ENCODE measurements at regions of chr14 and their contacts with region 1.

Region 1: DNA sequence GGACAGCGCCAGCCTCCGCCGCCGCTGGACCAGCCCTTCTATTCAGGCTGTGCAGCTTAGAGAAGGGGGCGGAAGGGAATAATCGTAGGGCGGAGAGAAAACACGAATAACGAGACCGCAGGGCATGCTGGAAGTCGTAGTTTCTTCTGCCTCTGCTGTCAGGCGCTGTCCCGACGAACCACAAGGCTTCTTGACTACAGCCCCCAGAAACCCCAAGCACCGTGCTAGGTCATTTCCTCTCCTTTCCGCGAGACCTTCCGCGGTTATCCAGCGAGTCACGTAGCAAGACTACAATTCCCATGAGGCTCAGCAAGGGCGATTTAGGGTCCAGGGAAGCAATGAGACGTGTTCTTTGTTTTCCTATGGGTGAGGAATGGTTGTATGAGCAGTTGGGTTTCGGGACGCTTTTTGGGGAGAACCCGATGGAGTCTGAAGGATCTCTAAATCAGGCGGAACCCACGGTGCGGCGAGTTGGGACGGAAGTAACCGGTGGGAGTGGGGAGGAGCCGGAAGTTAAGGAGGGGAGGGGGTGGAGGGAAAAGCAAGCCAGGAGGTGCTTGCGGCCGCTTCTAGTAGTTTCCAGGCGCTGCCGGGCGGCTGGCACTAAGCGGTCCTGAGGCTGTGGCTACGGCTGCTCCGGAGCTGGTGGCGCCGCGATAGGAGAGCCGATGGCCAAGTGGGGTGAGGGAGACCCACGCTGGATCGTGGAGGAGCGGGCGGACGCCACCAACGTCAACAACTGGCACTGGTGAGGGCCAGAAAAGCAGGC is at the starts of genes AHSA1 and VIPAS39:
- DNase-seq: peak; percentile 67 to 98 (median 96)
- ATAC-seq: peak; percentile 98
- H3K4me3 ChIP-seq: peak within 1 kb of the TSS; percentile 100
- H3K4me3 Mint-ChIP-seq: peak within 1 kb of the TSS; percentile 96 to 100 (median 100)
- H3K27ac ChIP-seq: peak within 1 kb of the TSS; percentile 82
- H3K27ac Mint-ChIP-seq: peak within 1 kb of the TSS; percentile 94 to 100 (median 99)
- H3K4me1 ChIP-seq: peaks cover 20 to 26% of the 10 kb centered on the region in 2 donors
- H3K4me1 Mint-ChIP-seq: peaks cover 22 to 67% (median 53%) of the 10 kb centered on the region in 7 donors
- H3K27me3 ChIP-seq: no peaks in the 10 kb centered on the region
- H3K27me3 Mint-ChIP-seq: no peaks in the 10 kb centered on the region
- total RNA-seq, gene AHSA1: 51.6 to 176 (median 103) TPM
- total RNA-seq, gene VIPAS39: 12.1 to 21.2 (median 20.5) TPM

Region 2: DNA sequence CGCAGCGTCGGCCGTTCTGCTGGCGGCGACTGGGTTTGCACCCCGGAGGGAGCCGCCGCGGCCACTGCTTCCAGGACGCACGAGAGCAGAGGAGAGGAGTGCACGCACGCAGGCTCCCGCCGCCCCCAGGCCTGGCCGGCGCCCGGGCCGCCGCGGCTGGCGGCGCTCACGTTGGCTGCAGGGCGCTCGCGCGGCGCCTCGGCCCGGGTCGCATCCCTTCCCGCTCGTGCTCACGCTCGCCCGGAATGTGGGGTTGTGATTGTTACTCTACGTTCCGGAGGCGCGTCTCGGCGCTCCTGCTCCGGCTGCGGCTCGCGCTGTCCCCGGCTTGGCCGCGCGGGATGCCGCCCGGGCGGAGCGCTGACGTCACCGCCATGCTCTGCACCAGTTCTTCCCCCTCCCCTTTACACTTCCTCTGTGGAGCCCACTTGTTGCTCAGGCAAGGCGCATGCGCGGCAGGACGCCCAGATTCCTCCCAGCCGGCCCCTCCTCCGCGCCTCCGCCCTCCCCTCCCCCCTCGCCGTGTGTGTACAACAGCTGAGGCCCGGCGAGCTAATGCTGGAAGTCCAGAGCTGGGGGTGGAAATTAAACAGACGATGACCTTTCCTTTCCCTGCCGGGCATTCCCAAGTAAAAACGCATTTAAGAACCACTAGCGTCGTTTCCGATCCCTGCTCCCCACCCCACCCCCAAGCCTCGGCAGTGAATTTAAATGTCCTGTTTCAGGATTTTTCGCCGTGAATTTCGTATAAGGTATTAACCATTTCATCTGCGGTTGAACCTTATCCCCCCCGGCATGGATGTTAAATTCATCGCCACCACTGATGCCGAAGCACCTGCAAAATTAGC is 429.1 kb before region 1 on chr14 and contains the start of gene IRF2BPL:
- CTCF ChIA-PET with region 1: no interaction called
- POLR2A ChIA-PET with region 1: no interaction called
- intact Hi-C with region 1: loop called in 1 of 2 experiments (anchors 1 kb)
- DNase-seq: peak; percentile 90 to 96 (median 94)
- ATAC-seq: peak; percentile 82
- H3K4me3 ChIP-seq: peak within 1 kb of the TSS; percentile 81
- H3K4me3 Mint-ChIP-seq: peak within 1 kb of the TSS; percentile 93 to 99 (median 98)
- H3K27ac ChIP-seq: peak within 1 kb of the TSS; percentile 98
- H3K27ac Mint-ChIP-seq: peak within 1 kb of the TSS; percentile 97 to 100 (median 99)
- H3K4me1 ChIP-seq: peaks cover 43 to 57% of the 10 kb centered on the region in 2 donors
- H3K4me1 Mint-ChIP-seq: peaks cover 33 to 65% (median 58%) of the 10 kb centered on the region in 7 donors
- H3K27me3 ChIP-seq: no peaks in the 10 kb centered on the region
- H3K27me3 Mint-ChIP-seq: no peaks in the 10 kb centered on the region
- total RNA-seq, gene IRF2BPL: 30.2 to 45.2 (median 34.6) TPM

Region 3: DNA sequence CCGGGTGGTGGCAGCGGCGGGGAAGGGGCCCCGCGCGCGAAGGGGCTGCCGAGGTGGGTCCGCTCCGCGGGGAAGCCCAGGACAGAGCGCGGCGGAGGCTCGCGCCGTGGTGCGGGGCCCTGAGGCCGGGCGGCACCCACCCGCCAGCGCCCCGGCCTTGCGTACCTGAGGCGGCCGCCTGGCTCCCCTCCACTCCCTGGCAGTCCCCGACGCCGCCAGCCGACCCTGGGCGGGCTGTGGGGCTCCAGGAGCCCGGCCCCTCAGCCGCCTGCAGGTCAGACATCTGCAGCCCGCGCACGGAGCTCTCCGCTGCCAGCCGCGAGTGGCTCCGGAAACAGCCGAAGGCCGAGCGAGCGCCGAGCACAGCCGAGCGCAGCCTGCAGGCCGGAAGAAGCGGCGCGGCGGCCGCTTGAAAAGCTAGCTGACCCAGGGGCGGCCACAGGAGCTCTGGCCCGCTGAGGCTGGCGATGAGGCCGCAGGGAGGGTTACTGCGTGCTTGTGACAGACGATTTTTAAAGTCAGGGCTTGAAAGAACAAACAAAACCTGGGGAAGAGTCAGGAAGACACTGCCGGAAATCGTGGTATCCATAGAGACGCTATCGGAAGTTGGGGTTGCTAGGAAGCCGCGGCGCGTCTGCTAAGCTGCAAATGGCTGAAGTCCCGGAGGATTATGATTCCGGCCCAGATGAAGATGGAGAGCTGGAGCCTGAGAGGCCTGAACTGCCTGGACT is 80.8 kb before region 1 on chr14 and contains the starts of genes SAMD15 and TMED8:
- CTCF ChIA-PET with region 1: no interaction called
- POLR2A ChIA-PET with region 1: interaction called, 5 read pairs
- intact Hi-C with region 1: loop called (anchors 1 kb)
- DNase-seq: peak; percentile 77 to 88 (median 83)
- ATAC-seq: peak; percentile 96
- H3K4me3 ChIP-seq: peak within 1 kb of the TSS; percentile 99
- H3K4me3 Mint-ChIP-seq: peak within 1 kb of the TSS in 7 of 10 donors; percentile 88 to 97 (median 93)
- H3K27ac ChIP-seq: peak within 1 kb of the TSS; percentile 87
- H3K27ac Mint-ChIP-seq: peak within 1 kb of the TSS; percentile 52 to 93 (median 77)
- H3K4me1 ChIP-seq: peaks cover 14 to 18% of the 10 kb centered on the region in 2 donors
- H3K4me1 Mint-ChIP-seq: peaks cover 17 to 41% (median 39%) of the 10 kb centered on the region in 7 donors
- H3K27me3 ChIP-seq: no peaks in the 10 kb centered on the region
- H3K27me3 Mint-ChIP-seq: peaks cover 0 to 10% (median 0%) of the 10 kb centered on the region in 5 donors
- total RNA-seq, gene SAMD15: 0.27 to 0.46 (median 0.42) TPM in 3 of 5 experiments, not detected in the others
- total RNA-seq, gene TMED8: 5.5 to 18.6 (median 7.0) TPM

Region 4: DNA sequence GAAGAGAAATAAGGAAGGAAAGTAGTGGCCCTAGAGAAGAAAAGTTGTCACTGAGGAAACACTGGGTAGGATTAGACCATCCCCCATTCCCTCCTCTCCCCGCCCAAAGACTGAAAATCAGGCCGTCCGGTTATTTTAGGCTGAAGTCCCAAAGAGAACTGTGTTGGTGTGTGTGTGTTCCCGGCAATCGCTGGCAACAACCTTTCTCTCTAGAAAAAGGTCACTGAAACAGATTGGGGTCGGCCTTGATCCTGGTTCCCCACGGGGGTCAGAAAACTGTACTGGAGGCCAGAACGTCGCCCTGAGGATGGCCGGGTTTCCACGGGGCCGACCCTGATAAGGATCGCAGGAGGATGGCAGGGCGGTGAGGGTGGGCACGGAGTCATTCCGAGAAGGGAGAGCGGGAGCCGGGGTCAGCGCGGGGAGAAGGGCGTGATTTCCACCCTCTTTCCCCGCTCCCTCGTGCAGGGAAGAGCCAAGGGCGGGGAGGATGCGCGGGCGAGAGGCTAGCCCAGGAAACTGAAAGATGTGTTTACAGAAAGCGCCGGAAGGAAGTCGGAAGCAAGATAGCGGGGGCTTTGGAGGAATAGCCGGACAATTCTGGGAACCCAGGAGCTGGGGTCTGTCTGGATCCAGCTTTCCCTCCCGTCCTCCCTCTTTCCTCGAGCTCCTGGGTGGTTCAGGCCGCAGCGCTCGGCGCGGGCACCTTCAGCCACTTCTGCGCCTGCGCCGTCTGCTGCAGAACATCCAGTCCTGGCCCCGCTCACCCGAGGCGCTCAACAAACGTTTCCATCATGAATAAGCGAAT is 184.0 kb after region 1 on chr14:
- CTCF ChIA-PET with region 1: no interaction called
- POLR2A ChIA-PET with region 1: no interaction called
- intact Hi-C with region 1: loop called in 1 of 2 experiments (anchors 1 kb)
- DNase-seq: peak; percentile 33 to 68 (median 59)
- ATAC-seq: peak; percentile 80
- H3K4me3 ChIP-seq: peak overlapping the region; percentile 84
- H3K4me3 Mint-ChIP-seq: peak overlapping the region; percentile 84 to 95 (median 92)
- H3K27ac ChIP-seq: peak overlapping the region; percentile 70
- H3K27ac Mint-ChIP-seq: peak overlapping the region; percentile 90 to 97 (median 92)
- H3K4me1 ChIP-seq: peaks cover 8% of the 10 kb centered on the region in 2 donors
- H3K4me1 Mint-ChIP-seq: peaks cover 0 to 19% (median 16%) of the 10 kb centered on the region in 7 donors
- H3K27me3 ChIP-seq: no peaks in the 10 kb centered on the region
- H3K27me3 Mint-ChIP-seq: peaks cover 0 to 3% (median 0%) of the 10 kb centered on the region in 5 donors

Region 5: GRCh38 chr14:77799863-77800730 is 342.4 kb after region 1 on chr14 and contains the start of gene ADCK1:
- CTCF ChIA-PET with region 1: no interaction called
- POLR2A ChIA-PET with region 1: no interaction called
- intact Hi-C with region 1: loop called (anchors 1 kb)
- DNase-seq: peak; percentile 74 to 87 (median 84)
- ATAC-seq: peak; percentile 94
- H3K4me3 ChIP-seq: peak within 1 kb of the TSS; percentile 71
- H3K4me3 Mint-ChIP-seq: peak within 1 kb of the TSS; percentile 83 to 89 (median 87)
- H3K27ac ChIP-seq: peak within 1 kb of the TSS; percentile 81
- H3K27ac Mint-ChIP-seq: peak within 1 kb of the TSS; percentile 34 to 92 (median 78)
- H3K4me1 ChIP-seq: no peaks in the 10 kb centered on the region
- H3K4me1 Mint-ChIP-seq: peaks cover 0 to 17% (median 6%) of the 10 kb centered on the region in 7 donors
- H3K27me3 ChIP-seq: no peaks in the 10 kb centered on the region
- H3K27me3 Mint-ChIP-seq: no peaks in the 10 kb centered on the region
- total RNA-seq, gene ADCK1: 4.5 to 10.6 (median 10.3) TPM

Measured in naive thymus-derived CD4-positive, alpha-beta T cell (primary cell).